ENCODE measurements at regions of chr5 and their contacts with region 1.

Region 1: GRCh38 chr5:79020861-79021561 is 35.9 kb upstream of the ARSB start:
- DNase-seq: peak; percentile 65
- ATAC-seq: peak; percentile 68
- H3K4me3 Mint-ChIP-seq: no peak overlapping the region
- H3K27ac Mint-ChIP-seq: peak overlapping the region; percentile 29
- H3K4me1 Mint-ChIP-seq: peaks cover 11% of the 10 kb centered on the region
- H3K27me3 Mint-ChIP-seq: peaks cover 88% of the 10 kb centered on the region

Region 2: DNA sequence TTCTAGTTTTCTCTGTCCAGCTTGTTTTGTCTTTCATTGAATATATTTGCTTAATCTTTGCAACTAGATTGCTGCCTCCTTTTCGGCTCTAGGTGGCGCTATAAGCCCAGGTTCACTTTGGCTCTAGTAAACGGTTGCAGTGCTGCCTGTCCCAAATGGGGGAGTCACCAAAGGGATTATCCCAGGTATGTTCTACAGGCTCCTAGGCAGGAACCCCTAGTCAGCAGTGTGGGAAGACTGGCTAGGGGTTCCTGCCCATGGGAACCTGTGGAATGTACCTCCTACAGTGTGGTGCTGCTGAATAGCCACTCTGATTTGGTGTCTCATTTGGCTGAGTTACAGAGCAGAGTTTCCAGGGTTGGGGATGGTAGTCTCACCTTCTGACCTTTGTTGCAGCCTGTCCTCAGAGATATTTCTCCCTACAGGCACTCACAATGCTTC is 121.1 kb before region 1 on chr5:
- CTCF ChIA-PET with region 1: interaction called, 14 read pairs
- DNase-seq: peak; percentile 55
- ATAC-seq: no peak
- H3K4me3 Mint-ChIP-seq: no peak overlapping the region
- H3K27ac Mint-ChIP-seq: no peak overlapping the region
- H3K4me1 Mint-ChIP-seq: no peaks in the 10 kb centered on the region
- H3K27me3 Mint-ChIP-seq: no peaks in the 10 kb centered on the region

Region 3: GRCh38 chr5:78959767-78960166 is 61.2 kb before region 1 on chr5:
- CTCF ChIA-PET with region 1: no interaction called
- DNase-seq: no peak
- ATAC-seq: no peak
- H3K4me3 Mint-ChIP-seq: no peak overlapping the region
- H3K27ac Mint-ChIP-seq: no peak overlapping the region
- H3K4me1 Mint-ChIP-seq: no peaks in the 10 kb centered on the region
- H3K27me3 Mint-ChIP-seq: no peaks in the 10 kb centered on the region

Region 4: DNA sequence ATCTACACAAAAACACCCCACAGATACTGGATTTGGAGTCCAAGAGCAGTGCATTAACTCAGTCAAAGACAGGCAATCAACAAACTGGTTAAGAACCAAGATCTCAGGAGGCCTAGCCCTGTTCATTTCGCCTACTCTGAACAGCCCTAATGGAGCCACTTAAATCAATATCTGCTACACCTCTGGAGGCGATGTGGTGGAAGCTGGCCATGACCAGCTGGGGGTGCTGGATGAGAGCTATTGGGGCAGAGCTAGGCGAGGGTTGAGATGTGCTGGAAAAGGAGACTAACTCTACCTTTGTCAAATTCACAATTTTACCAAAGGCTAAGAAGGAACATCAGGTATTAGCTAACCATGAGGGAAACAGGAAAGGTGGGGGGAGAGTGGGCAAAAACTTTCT is 12.6 kb before region 1 on chr5:
- CTCF ChIA-PET with region 1: interaction called, 12 read pairs
- DNase-seq: no peak
- ATAC-seq: no peak
- H3K4me3 Mint-ChIP-seq: no peak overlapping the region
- H3K27ac Mint-ChIP-seq: no peak overlapping the region
- H3K4me1 Mint-ChIP-seq: no peaks in the 10 kb centered on the region
- H3K27me3 Mint-ChIP-seq: peaks cover 55% of the 10 kb centered on the region

Region 5: DNA sequence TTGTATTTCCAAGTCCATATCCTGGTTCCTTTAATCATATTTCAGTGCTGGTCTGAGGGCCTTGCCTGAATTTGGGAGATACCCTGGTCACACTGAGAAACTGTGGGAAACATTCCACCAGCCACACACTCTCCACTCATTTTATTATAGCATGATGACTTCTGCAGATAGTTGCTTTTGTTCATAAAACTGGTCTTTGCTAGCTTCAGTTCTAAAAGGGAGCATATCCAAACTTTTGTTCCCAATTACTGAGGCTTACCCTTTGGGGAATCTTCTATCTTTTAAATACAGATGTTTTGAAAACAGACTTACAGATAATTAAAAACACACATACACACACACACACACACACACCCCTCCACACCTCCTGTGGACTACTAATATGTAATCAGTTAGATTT is 27.4 kb after region 1 on chr5:
- CTCF ChIA-PET with region 1: interaction called, 13 read pairs
- DNase-seq: no peak
- ATAC-seq: no peak
- H3K4me3 Mint-ChIP-seq: no peak overlapping the region
- H3K27ac Mint-ChIP-seq: no peak overlapping the region
- H3K4me1 Mint-ChIP-seq: no peaks in the 10 kb centered on the region
- H3K27me3 Mint-ChIP-seq: peaks cover 46% of the 10 kb centered on the region

Region 6: DNA sequence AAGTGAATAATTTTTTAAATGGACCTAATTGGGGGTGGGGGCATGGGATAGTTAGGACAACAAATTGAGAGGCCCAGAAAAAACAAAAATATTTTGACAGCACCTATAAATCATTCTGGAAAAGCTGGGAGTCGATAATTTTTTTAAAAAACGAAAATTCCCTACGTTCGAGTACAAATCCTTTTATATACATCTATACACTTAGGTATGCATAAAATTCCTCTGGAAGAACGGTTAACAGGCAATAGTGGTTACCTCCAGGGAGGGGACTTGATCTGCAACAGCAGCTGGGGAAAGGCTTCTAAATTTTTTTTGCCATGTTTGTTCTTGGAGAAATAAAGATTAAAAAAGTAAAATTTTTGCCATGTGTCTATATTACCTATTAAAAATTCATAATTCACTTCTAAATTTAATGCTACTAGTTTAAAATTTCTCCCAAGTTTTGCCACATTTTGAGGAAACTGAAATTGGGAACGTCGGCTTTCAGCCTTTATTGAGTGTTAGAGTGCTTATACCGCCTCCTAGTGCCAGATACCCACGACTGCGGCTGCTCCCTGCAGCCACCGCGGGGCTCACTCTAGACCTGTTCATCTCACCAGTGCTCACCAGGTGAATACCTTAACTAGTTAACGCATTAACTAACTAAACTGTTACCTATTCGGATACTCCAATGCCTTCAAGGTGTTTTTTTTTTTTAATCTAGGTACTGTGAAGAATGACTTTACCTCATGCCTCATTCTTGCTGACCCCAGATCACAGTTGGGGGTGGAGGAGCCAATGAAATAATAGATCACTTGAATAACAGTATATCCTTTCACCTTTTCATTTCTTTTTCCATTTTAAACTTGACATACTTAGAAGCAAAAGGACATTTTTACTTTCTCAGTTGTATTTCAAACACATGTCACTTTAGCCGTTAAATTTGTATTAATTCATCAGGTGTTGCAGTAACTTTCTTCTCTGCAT is 88.8 kb after region 1 on chr5:
- CTCF ChIA-PET with region 1: interaction called, 19 read pairs
- DNase-seq: peak; percentile 50
- ATAC-seq: no peak
- H3K4me3 Mint-ChIP-seq: no peak overlapping the region
- H3K27ac Mint-ChIP-seq: no peak overlapping the region
- H3K4me1 Mint-ChIP-seq: peaks cover 6% of the 10 kb centered on the region
- H3K27me3 Mint-ChIP-seq: peaks cover 89% of the 10 kb centered on the region

Region 7: DNA sequence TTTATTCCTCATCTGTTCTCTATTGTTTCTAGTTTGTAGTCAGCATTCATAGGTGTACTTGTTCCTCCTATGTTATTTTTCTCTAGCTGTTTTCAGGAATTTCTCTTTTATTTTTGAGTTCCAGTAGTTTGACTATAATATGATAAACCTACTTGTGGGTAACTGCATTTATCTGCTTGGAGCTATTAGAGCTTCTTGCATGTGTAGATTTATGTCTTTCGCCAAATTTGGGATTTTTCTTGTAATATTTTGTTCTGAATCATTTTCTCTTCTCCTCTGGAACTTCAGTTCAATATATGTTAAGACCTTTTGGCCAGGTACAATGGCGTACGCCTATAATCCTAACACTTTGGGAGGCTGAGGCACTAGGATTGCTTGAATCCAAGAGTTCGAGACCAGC is 252.3 kb after region 1 on chr5:
- CTCF ChIA-PET with region 1: no interaction called
- DNase-seq: no peak
- ATAC-seq: no peak
- H3K4me3 Mint-ChIP-seq: no peak overlapping the region
- H3K27ac Mint-ChIP-seq: no peak overlapping the region
- H3K4me1 Mint-ChIP-seq: peaks cover 5% of the 10 kb centered on the region
- H3K27me3 Mint-ChIP-seq: no peaks in the 10 kb centered on the region

Measured in activated CD8-positive, alpha-beta memory T cell treated with anti-CD3 and anti-CD28 coated beads, Interleukin-2, amount 10 ng/mL, durations not matched to agents 7 days and 5 days (primary cell).